ENCODE measurements at regions of chr11 and their contacts with region 1.

Region 1: DNA sequence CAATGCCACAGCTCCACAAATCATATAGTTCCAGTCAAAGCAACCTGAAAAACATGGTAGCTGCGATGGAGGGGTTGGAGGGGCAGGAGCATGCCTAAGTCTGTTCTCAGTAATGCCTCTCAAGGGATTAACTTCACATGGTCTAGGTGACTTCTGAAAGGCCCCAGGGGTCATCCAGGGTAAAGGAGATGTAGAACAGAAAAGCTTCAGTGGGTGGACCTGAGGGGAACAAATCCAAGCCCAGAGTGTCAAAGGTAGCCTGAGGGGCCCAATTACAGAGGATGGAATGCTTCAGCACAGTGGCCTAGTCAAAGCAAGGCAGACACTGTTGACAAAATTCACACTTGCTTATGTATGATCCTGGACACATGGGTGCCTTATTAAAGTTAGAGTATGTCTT is 23.3 kb downstream of the OR4D9 start:
- DNase-seq: no peak
- ATAC-seq: no peak
- H3K4me3 ChIP-seq: no peak overlapping the region
- H3K4me3 Mint-ChIP-seq: no peak overlapping the region
- H3K27ac ChIP-seq: no peak overlapping the region
- H3K27ac Mint-ChIP-seq: no peak overlapping the region
- H3K4me1 ChIP-seq: no peaks in the 10 kb centered on the region
- H3K4me1 Mint-ChIP-seq: peaks cover 9 to 14% (median 12%) of the 10 kb centered on the region in 7 donors
- H3K27me3 ChIP-seq: no peaks in the 10 kb centered on the region
- H3K27me3 Mint-ChIP-seq: peaks cover 0 to 9% (median 0%) of the 10 kb centered on the region in 5 donors

Region 2: DNA sequence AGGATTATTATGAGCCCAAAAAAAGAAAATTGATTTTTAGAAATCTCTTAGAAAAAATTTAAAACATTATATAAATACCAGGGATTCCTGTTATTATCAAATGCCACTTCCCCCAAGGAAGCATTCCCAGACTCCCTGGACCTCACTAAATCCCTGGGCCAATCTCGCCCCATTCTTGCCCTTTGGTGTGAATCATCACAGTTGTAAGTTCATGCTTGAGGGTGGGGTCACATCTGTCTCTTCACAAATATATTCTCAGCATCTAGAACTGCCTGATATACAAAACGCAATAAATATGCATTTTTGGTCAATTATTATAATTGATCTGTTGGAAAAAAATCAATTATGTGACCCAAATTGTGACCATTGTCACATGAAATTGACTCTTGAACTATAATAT is 86.2 kb before region 1 on chr11:
- CTCF ChIA-PET with region 1: no interaction called
- POLR2A ChIA-PET with region 1: no interaction called
- intact Hi-C with region 1: no loop called
- DNase-seq: no peak
- ATAC-seq: no peak
- H3K4me3 ChIP-seq: no peak overlapping the region
- H3K4me3 Mint-ChIP-seq: no peak overlapping the region
- H3K27ac ChIP-seq: no peak overlapping the region
- H3K27ac Mint-ChIP-seq: no peak overlapping the region
- H3K4me1 ChIP-seq: no peaks in the 10 kb centered on the region
- H3K4me1 Mint-ChIP-seq: no peaks in the 10 kb centered on the region
- H3K27me3 ChIP-seq: no peaks in the 10 kb centered on the region
- H3K27me3 Mint-ChIP-seq: peaks cover 5 to 12% (median 7%) of the 10 kb centered on the region in 5 donors

Region 3: DNA sequence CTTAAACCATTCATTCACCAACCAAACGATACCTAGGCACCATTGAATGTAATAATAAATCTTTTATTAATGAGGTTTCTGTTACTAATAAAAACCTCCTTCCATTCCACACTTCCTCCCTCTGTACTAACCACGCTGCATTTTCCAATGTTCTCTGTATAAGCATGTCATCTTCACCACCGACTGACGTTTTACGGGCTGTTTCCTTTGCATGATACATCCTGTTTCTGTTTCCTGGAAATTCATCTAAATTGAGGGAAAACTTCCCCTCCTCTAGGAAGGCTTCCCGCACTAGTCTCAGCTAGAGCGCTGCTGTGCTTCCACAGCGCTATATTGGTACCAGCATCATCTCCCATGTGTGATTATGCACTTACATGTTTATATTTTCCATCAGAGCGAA is 59.5 kb before region 1 on chr11:
- CTCF ChIA-PET with region 1: no interaction called
- POLR2A ChIA-PET with region 1: no interaction called
- intact Hi-C with region 1: no loop called
- DNase-seq: no peak
- ATAC-seq: no peak
- H3K4me3 ChIP-seq: no peak overlapping the region
- H3K4me3 Mint-ChIP-seq: no peak overlapping the region
- H3K27ac ChIP-seq: no peak overlapping the region
- H3K27ac Mint-ChIP-seq: no peak overlapping the region
- H3K4me1 ChIP-seq: no peaks in the 10 kb centered on the region
- H3K4me1 Mint-ChIP-seq: no peaks in the 10 kb centered on the region
- H3K27me3 ChIP-seq: no peaks in the 10 kb centered on the region
- H3K27me3 Mint-ChIP-seq: peaks cover 8 to 35% (median 15%) of the 10 kb centered on the region in 5 donors

Region 4: GRCh38 chr11:59578369-59578768 is 43.7 kb after region 1 on chr11:
- CTCF ChIA-PET with region 1: no interaction called
- POLR2A ChIA-PET with region 1: no interaction called
- intact Hi-C with region 1: loop called in 1 of 2 experiments (anchors 1 kb)
- DNase-seq: no peak
- ATAC-seq: no peak
- H3K4me3 ChIP-seq: no peak overlapping the region
- H3K4me3 Mint-ChIP-seq: no peak overlapping the region
- H3K27ac ChIP-seq: no peak overlapping the region
- H3K27ac Mint-ChIP-seq: peak overlapping the region in 1 of 9 donors; percentile 72
- H3K4me1 ChIP-seq: no peaks in the 10 kb centered on the region
- H3K4me1 Mint-ChIP-seq: no peaks in the 10 kb centered on the region
- H3K27me3 ChIP-seq: no peaks in the 10 kb centered on the region
- H3K27me3 Mint-ChIP-seq: no peaks in the 10 kb centered on the region

Measured in naive thymus-derived CD4-positive, alpha-beta T cell (primary cell).